ENCODE measurements at regions of chr13 and their contacts with region 1.

Region 1: DNA sequence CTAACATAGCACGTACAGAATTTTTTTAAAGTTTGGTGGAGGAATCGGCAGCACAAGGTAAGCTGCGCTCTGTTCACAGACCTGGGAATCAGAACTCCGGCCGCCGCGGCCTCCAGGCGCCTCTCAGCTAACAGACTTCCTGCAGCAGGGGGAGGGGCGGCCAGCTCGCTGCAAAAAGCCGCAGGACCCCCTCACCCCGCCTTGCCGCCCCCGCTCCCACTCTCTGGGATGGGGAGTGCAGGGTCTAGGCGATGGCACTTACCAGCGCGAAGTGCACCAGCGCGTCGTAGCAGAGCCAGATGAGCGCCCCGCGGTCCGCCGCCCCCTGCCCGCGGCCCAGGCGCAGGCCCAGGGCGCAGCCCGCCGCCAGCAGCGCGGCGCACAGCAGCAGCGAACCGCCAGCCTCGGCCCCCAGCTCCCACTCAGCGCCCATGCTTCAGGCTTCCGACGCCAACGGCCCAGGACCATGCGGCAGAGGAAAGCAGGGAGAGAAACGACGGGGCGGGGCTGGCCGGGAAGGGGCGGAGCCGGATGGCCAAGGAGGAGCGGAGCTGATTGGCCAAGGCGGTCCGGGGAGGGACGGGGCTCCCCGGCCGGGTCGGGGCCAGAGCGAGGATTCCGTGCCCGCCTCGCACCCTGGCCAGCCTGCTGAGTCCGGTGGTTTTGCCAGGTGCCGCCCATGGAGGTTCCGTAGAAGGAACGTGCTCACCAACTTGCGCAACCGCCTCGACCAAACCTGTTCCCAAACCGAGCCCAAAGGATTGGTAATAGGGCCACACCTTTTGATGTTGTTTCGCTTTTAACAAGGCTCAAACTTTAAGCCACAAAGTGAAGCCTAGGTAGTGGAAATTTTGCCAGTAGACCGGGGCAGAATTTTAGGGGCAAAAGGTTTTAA is at the start of gene EBPL:
- DNase-seq: peak; percentile 94
- H3K4me3 Mint-ChIP-seq: peak within 1 kb of the TSS; percentile 86
- H3K27ac Mint-ChIP-seq: peak within 1 kb of the TSS; percentile 80
- H3K4me1 Mint-ChIP-seq: peaks cover 35% of the 10 kb centered on the region
- H3K27me3 Mint-ChIP-seq: no peaks in the 10 kb centered on the region
- total RNA-seq, gene EBPL: 46.8 to 49.3 TPM

Region 2: GRCh38 chr13:49679246-49679645 is 12.0 kb before region 1 on chr13:
- CTCF ChIA-PET with region 1: interaction called, 3 read pairs
- intact Hi-C with region 1: loop called (anchors 1 kb)
- DNase-seq: peak; percentile 43
- H3K4me3 Mint-ChIP-seq: no peak overlapping the region
- H3K27ac Mint-ChIP-seq: no peak overlapping the region
- H3K4me1 Mint-ChIP-seq: peaks cover 19% of the 10 kb centered on the region
- H3K27me3 Mint-ChIP-seq: no peaks in the 10 kb centered on the region

Region 3: GRCh38 chr13:49792550-49793324 is 101.5 kb after region 1 on chr13 and contains the start of gene KPNA3:
- CTCF ChIA-PET with region 1: interaction called, 8 read pairs
- intact Hi-C with region 1: loop called (anchors 1 kb)
- DNase-seq: peak; percentile 96
- H3K4me3 Mint-ChIP-seq: peak within 1 kb of the TSS; percentile 92
- H3K27ac Mint-ChIP-seq: peak within 1 kb of the TSS; percentile 94
- H3K4me1 Mint-ChIP-seq: peaks cover 29% of the 10 kb centered on the region
- H3K27me3 Mint-ChIP-seq: peaks cover 4% of the 10 kb centered on the region
- total RNA-seq, gene KPNA3: 47.9 to 50.7 TPM

Measured in activated naive CD4-positive, alpha-beta T cell treated with anti-CD3 and anti-CD28 coated beads for 36 hours (primary cell).